ENCODE measurements at regions of chr22 and their contacts with region 1.

Region 1: DNA sequence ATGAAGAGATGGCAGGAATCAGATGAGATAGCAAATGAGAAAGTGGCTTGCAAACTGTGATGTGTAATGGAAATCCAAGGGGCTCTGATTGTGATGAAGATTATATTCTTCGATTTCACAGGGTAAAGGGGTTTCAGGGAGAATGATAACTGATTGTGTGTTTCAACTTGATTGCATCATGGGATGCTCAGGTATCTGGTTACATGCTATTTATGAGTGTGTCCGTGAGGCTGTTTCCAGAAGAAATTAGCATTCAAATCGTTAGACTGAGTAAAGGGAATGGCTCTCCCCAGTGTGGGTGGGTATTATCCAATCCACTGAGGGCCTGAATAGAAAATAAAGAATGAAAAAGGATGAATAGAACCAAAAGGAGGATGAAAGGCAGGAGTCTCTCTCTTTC is 278.7 kb upstream of the LARGE1 start:
- DNase-seq: no peak
- ATAC-seq: no peak
- H3K4me3 ChIP-seq: no peak overlapping the region
- H3K27ac ChIP-seq: no peak overlapping the region
- H3K4me1 ChIP-seq: no peaks in the 10 kb centered on the region
- H3K27me3 ChIP-seq: peaks cover 0 to 3% (median 0%) of the 10 kb centered on the region in 7 donors
- CTCF ChIP-seq: no peak

Region 2: GRCh38 chr22:34135751-34136150 is 63.2 kb before region 1 on chr22:
- intact Hi-C with region 1: no loop called
- DNase-seq: no peak
- ATAC-seq: no peak
- H3K4me3 ChIP-seq: no peak overlapping the region
- H3K27ac ChIP-seq: no peak overlapping the region
- H3K4me1 ChIP-seq: no peaks in the 10 kb centered on the region
- H3K27me3 ChIP-seq: peaks cover 0 to 6% (median 0%) of the 10 kb centered on the region in 7 donors
- CTCF ChIP-seq: no peak

Region 3: DNA sequence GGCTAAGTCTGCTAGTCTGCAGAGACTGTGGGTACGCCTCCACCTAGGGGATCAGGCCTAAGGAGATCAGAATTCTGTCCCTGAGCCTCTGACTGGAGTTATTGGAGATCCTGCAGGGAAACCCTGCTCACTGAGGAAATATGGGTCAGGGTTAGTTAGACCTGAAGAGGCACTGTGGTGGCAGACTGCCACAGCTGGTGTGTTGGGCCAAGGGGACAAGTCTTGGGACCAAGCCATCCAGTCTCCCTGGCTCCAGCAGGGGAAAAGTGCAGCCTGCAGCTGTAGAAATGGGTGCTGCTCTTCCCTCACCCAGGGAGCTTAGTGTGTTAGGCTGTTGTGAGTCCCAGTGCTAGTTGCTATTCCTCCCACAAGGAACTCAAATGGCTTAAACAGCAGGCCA is 56.1 kb after region 1 on chr22:
- intact Hi-C with region 1: loop called in 1 of 10 experiments (anchors 10 kb)
- DNase-seq: peak; percentile 18 to 62
- ATAC-seq: peak in 5 of 8 donors; percentile 8 to 73 (median 61)
- H3K4me3 ChIP-seq: no peak overlapping the region
- H3K27ac ChIP-seq: no peak overlapping the region
- H3K4me1 ChIP-seq: no peaks in the 10 kb centered on the region
- H3K27me3 ChIP-seq: no peaks in the 10 kb centered on the region
- CTCF ChIP-seq: peak in 1 of 9 donors; percentile 8

Measured in heart right ventricle (tissue), 16 donors.